ENCODE measurements at regions of chr1 and their contacts with region 1.

Region 1: DNA sequence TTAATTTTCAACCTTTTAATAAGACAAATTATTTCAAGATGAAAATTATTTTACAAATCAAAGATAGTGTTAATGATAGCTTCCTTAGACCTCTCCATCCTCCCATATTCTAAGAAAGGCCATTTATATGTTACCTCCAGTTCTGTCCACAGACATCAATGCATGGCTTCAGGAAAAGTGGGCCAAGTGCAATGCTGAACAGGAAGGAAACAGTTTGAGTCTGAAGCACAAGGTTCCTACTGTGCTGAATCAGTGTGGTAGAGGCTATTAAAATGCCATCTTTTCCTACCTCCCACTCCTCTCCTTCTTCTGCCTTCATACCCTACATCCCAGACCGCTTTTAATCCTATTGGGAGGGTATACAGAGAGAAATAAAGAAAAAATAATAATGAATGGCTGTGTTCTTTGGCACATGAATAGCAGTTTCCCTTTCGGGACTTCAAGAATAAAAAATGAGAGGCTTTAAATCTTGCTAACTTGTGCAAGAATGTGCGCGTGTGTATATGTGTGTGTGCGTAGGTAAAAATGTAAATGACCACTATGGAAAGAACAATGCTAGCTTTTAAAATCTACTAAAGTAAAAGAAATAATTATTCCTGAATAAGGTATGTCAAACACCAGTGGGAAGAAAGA is 62.6 kb upstream of the C1orf105 start:
- DNase-seq: no peak
- ATAC-seq: no peak
- H3K4me3 Mint-ChIP-seq: no peak overlapping the region
- H3K27ac Mint-ChIP-seq: peak overlapping the region; percentile 12
- H3K4me1 Mint-ChIP-seq: peaks cover 44% of the 10 kb centered on the region
- H3K27me3 Mint-ChIP-seq: no peaks in the 10 kb centered on the region

Region 2: DNA sequence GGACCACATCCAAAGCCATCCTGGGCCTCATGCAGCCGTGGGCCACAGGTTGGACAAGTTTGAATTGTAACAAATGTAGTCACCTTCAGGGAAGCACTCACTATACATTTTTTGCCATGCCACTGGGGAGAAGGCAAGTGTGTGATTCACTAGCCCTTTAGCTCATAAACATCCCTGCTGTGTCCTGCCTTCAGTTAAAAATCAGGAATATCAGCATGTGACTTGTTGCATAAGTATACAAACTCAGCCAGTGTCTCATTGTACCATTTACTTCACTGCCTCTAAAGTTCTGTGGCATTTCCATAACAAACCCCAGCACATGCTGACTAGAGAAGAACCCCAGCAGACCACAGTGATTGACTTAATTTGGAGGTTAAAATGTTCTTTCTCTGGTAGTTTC is 79.4 kb before region 1 on chr1:
- CTCF ChIA-PET with region 1: no interaction called
- POLR2A ChIA-PET with region 1: no interaction called
- DNase-seq: no peak
- ATAC-seq: no peak
- H3K4me3 Mint-ChIP-seq: no peak overlapping the region
- H3K27ac Mint-ChIP-seq: no peak overlapping the region
- H3K4me1 Mint-ChIP-seq: no peaks in the 10 kb centered on the region
- H3K27me3 Mint-ChIP-seq: no peaks in the 10 kb centered on the region

Region 3: GRCh38 chr1:172338295-172338735 is 19.6 kb before region 1 on chr1:
- CTCF ChIA-PET with region 1: interaction called, 22 read pairs
- POLR2A ChIA-PET with region 1: interaction called, 8 read pairs
- DNase-seq: no peak
- ATAC-seq: peak; percentile 55
- H3K4me3 Mint-ChIP-seq: no peak overlapping the region
- H3K27ac Mint-ChIP-seq: no peak overlapping the region
- H3K4me1 Mint-ChIP-seq: peaks cover 16% of the 10 kb centered on the region
- H3K27me3 Mint-ChIP-seq: no peaks in the 10 kb centered on the region

Region 4: GRCh38 chr1:172373864-172374263 is 16.0 kb after region 1 on chr1:
- CTCF ChIA-PET with region 1: interaction called, 23 read pairs
- POLR2A ChIA-PET with region 1: interaction called, 9 read pairs
- DNase-seq: no peak
- ATAC-seq: no peak
- H3K4me3 Mint-ChIP-seq: no peak overlapping the region
- H3K27ac Mint-ChIP-seq: no peak overlapping the region
- H3K4me1 Mint-ChIP-seq: peaks cover 20% of the 10 kb centered on the region
- H3K27me3 Mint-ChIP-seq: no peaks in the 10 kb centered on the region

Region 5: DNA sequence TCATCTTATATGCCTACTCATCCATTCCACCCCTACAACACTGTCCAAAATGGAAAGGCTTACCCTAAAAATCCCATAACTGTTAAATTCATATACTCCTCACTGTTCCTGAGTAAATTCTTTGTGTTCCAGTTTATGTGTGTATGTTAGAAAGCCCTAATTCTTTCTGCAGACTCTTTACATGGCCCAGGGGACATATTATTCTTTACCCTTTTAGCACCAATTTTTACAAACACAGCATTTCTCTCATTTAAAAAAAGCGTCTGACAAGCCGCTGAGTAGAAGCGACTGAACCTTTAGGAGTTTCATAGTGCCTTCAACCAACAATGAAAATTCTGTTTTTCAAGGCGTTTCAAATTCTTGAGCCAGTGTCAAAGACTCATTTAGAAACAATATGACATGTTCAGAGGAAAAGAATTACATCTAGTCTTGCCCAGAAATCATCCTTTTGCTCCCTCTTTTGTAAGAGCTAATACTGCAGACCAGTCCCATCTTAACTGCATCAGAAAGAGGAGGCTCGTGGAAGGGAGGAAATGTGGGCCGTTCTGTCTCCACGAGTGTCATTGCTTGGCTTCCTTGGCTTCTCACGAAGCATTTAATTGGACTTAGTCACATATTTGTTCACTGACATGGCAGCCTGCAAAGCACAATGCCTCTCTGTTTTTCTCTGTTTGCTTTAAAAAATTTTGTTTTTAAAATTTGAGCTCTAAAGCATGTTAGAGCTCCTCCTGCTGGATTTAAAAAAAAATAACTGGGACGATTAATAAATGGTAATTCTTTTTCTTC is 41.3 kb after region 1 on chr1:
- CTCF ChIA-PET with region 1: interaction called, 56 read pairs
- POLR2A ChIA-PET with region 1: interaction called, 11 read pairs
- DNase-seq: peak; percentile 31
- ATAC-seq: no peak
- H3K4me3 Mint-ChIP-seq: peak overlapping the region; percentile 31
- H3K27ac Mint-ChIP-seq: peak overlapping the region; percentile 63
- H3K4me1 Mint-ChIP-seq: peaks cover 64% of the 10 kb centered on the region
- H3K27me3 Mint-ChIP-seq: no peaks in the 10 kb centered on the region

Region 6: GRCh38 chr1:172417552-172417951 is 59.7 kb after region 1 on chr1:
- CTCF ChIA-PET with region 1: no interaction called
- POLR2A ChIA-PET with region 1: no interaction called
- DNase-seq: no peak
- ATAC-seq: no peak
- H3K4me3 Mint-ChIP-seq: no peak overlapping the region
- H3K27ac Mint-ChIP-seq: no peak overlapping the region
- H3K4me1 Mint-ChIP-seq: no peaks in the 10 kb centered on the region
- H3K27me3 Mint-ChIP-seq: no peaks in the 10 kb centered on the region